ENCODE measurements at regions of chr11 and their contacts with region 1.

Region 1: DNA sequence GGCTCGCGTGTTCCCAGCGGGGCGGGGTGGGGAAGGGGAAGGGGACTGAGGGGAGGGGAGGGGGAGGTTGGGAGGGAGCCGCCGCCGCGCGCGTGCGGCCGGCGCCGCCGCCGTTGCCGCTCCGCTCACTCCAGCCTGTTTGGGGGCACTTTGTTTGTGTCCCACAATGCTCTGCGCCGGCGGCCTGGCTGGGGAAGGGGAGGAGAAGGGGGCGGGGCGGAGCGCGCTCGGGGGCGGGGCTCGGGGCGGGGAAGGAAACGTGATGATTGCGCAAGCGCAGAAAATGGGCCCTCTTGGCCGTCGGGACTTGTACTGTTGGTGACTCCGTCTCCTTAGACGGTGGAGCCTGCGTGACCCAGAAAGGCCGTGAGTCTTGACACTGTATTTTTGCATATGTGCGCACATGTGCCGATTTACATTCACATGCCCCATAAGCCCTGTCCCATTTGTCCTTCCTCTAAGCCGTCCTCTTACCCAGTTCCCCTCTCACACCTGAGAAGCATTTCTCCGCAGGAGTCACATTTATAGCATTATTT is at the start of gene ZBTB44:
- DNase-seq: peak; percentile 93 to 97
- ATAC-seq: peak; percentile 95 to 96 (median 96)
- H3K4me3 ChIP-seq: peak within 1 kb of the TSS; percentile 96
- H3K27ac ChIP-seq: peak within 1 kb of the TSS; percentile 90
- H3K4me1 ChIP-seq: peaks cover 36% of the 10 kb centered on the region
- H3K27me3 ChIP-seq: no peaks in the 10 kb centered on the region
- CTCF ChIP-seq: no peak
- total RNA-seq, gene ZBTB44: 58.6 to 77.2 (median 71.7) TPM

Region 2: DNA sequence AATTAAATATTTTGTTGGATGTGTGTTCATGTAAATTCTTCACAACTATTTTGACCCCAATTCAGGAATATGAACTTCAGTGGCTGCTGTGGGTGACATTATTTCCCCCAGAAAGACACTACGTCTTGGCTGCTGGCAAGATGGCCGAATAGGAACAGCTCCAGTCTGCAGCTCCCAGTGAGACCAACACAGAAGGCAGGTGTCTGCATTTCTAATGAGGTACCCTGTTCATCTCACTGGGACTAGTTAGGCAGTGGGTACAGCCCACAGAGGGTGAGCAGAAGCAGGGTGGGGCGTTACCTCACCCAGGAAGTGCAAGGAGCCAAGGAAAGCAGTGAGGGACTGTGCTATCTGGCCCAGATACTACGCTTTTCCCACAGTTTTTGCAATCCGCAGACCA is 65.4 kb before region 1 on chr11:
- intact Hi-C with region 1: no loop called
- DNase-seq: no peak
- ATAC-seq: no peak
- H3K4me3 ChIP-seq: no peak overlapping the region
- H3K27ac ChIP-seq: no peak overlapping the region
- H3K4me1 ChIP-seq: peaks cover 23% of the 10 kb centered on the region
- H3K27me3 ChIP-seq: no peaks in the 10 kb centered on the region
- CTCF ChIP-seq: no peak

Region 3: DNA sequence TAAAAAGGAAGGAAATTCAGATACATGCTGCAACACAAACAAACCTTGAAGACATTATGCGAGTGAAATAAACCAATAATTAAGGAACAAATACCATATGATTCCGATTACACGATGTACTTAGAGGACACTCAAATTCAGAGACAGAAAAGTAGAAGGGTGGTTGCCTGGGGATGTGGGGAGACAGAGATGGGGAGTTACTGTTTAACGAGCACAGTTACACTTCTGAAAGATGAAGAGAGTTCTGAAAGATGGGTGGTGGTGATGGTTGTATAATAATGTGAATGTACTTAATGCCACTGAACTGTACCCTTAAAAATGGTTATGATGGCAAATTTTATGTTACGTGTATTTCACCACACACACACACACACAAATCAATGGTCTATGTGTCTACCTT is 14.8 kb before region 1 on chr11:
- intact Hi-C with region 1: no loop called
- DNase-seq: no peak
- ATAC-seq: peak in 1 of 4 donors; percentile 6
- H3K4me3 ChIP-seq: no peak overlapping the region
- H3K27ac ChIP-seq: peak overlapping the region; percentile 73
- H3K4me1 ChIP-seq: peaks cover 14% of the 10 kb centered on the region
- H3K27me3 ChIP-seq: no peaks in the 10 kb centered on the region
- CTCF ChIP-seq: no peak

Region 4: DNA sequence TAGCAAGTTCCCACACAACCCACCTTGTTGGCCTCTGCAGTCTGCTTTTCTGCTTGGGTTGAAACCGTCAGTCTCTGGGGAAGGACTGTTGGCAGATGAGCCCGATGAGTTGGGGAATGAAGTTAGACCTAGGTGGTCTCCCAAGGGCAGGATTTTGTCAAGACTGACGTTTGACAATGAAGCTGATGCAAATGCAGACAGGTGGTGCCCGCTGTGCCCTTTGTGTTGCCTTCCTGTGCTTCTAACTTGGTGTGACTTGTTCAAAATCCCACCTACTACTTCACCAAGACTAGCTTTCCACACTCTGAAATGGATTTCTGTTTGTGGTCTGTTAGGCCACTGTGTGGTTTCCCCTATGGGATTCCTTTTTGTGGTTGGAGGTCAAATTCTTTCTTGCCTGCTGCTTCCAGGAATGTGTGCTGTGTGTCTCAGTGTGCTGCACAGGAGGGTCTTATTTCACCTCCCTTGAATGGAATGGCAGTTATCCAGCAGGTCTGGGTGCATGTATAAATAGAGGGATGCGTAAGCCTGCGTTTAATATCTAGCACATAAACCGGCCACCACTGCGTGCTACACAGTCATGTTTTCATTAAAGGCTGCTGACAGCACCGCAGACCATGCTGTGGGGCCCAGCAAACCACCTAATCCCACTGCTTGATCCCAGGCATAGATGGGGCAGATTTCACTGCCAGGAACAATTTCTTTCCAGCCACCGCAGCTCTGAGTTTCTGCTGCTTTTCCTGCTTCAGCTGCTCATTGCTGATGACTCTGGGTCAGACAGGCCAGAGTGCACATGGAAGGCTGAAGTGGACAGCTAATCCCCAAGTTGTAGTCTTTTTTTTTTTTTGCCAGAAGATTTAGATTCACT is 68.8 kb after region 1 on chr11:
- intact Hi-C with region 1: loop called in 1 of 2 experiments (anchors 5 kb)
- DNase-seq: peak; percentile 46 to 84
- ATAC-seq: peak; percentile 95 to 98 (median 96)
- H3K4me3 ChIP-seq: no peak overlapping the region
- H3K27ac ChIP-seq: peak overlapping the region; percentile 84
- H3K4me1 ChIP-seq: peaks cover 23% of the 10 kb centered on the region
- H3K27me3 ChIP-seq: no peaks in the 10 kb centered on the region
- CTCF ChIP-seq: no peak

Measured in psoas muscle (tissue), 8 donors.